Activated B cell treated with CpG ODN at 0.5 μM for 24 hours (primary cell): ENCODE measurements at regions of chr13 and their contacts with region 1.

Region 1: DNA sequence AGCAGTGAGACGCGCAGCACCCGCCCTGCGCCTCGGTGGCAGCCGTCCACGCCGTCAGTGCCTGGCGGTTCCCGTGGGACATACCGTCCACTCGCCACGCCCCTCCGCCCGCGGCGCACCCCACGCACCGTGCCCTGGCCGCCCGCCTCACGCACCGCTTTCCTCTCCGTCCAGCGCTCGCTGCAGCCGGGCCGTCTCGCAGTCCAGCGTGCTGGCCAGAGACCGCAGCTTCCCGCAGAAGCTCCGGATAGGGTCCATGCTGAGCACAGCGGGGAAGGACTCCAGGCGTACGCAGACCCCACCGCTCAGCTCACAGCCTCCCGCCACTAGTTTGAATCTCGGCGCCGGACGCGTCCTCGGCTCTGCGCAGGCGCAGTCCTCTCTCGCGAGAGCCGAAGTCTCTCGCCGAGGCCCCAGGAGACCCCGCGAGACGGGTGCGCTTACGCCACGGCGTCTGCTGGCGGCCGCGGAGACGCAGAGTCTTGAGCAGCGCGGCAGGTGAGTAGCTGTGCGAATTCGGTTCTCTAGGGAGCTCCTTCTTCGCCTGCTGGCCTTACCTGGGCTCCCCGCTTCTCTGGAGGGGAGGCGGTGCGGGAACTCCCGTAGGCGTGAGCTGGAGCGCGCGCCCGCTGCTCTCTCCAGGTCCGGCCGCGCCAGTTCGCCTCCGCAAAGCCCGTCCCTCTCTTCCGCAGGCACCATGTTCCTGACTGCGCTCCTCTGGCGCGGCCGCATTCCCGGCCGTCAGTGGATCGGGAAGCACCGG is at the starts of genes MRPL57 and SKA3:
- DNase-seq: peak; percentile 97
- ATAC-seq: peak; percentile 94
- H3K4me3 Mint-ChIP-seq: peak within 1 kb of the TSS; percentile 96
- H3K27ac Mint-ChIP-seq: peak within 1 kb of the TSS; percentile 91
- H3K4me1 Mint-ChIP-seq: peaks cover 22% of the 10 kb centered on the region
- H3K27me3 Mint-ChIP-seq: no peaks in the 10 kb centered on the region
- CTCF ChIP-seq: no peak
- total RNA-seq, gene MRPL57: 11.3 and 12.2 TPM in 2 replicates
- total RNA-seq, gene SKA3: 0.83 and 1.7 TPM in 2 replicates

Region 2: GRCh38 chr13:20902438-20903163 is 273.8 kb before region 1 on chr13 and contains the start of gene XPO4:
- CTCF ChIA-PET with region 1: no interaction called
- POLR2A ChIA-PET with region 1: interaction called, 5 read pairs
- intact Hi-C with region 1: loop called (anchors 1 kb)
- DNase-seq: peak; percentile 80
- ATAC-seq: peak; percentile 93
- H3K4me3 Mint-ChIP-seq: peak within 1 kb of the TSS; percentile 91
- H3K27ac Mint-ChIP-seq: peak within 1 kb of the TSS; percentile 86
- H3K4me1 Mint-ChIP-seq: peaks cover 32% of the 10 kb centered on the region
- H3K27me3 Mint-ChIP-seq: peaks cover 2% of the 10 kb centered on the region
- CTCF ChIP-seq: no peak
- total RNA-seq, gene XPO4: 25.2 and 27.4 TPM in 2 replicates

Region 3: DNA sequence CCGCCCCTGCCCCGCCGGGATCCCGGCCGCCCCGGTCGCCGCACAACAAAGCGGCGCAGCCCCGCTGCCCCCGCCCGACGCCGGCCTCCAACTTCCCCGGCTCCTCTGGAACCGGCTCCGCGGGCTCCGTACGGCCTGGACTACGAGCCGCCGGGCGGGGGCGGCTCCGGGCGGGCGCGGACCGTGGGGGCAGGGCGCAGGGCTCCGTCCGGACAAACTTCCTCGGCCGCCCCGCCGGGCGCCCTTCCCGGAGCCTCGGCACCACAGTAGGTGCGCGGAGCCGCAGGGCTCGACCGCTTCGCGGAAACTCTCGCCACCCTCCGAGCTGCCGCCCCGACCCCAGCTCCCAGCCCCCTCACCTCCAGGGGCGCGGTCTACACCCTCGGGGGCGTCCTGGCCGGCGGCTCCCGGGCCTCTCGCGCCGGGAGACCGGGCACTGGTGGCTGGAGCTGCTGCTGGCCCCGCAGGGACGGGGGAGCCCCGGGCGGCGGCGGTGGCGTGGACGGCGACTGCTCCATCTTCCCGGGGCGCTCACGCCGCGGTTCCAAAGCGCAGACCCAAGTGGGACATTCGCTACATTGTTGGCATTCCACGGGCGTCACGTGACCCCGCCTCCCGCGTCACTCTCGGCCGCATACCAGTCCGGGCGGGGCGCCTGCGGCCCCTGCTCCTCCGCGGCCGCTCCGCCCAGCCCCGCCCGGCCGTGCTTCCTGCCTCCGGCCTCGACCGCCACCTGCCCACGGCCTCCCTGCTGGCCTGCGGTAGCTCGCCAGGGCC is 115.2 kb before region 1 on chr13 and contains the start of gene LATS2:
- CTCF ChIA-PET with region 1: no interaction called
- POLR2A ChIA-PET with region 1: no interaction called
- intact Hi-C with region 1: loop called (anchors 2 kb)
- DNase-seq: peak; percentile 63
- ATAC-seq: peak; percentile 81
- H3K4me3 Mint-ChIP-seq: peak within 1 kb of the TSS; percentile 79
- H3K27ac Mint-ChIP-seq: peak within 1 kb of the TSS; percentile 50
- H3K4me1 Mint-ChIP-seq: peaks cover 3% of the 10 kb centered on the region
- H3K27me3 Mint-ChIP-seq: peaks cover 11% of the 10 kb centered on the region
- CTCF ChIP-seq: no peak
- total RNA-seq, gene LATS2: 1.5 and 1.7 TPM in 2 replicates

Region 4: GRCh38 chr13:21137696-21138095 is 38.7 kb before region 1 on chr13:
- CTCF ChIA-PET with region 1: no interaction called
- POLR2A ChIA-PET with region 1: interaction called, 13 read pairs
- intact Hi-C with region 1: no loop called
- DNase-seq: no peak
- ATAC-seq: no peak
- H3K4me3 Mint-ChIP-seq: no peak overlapping the region
- H3K27ac Mint-ChIP-seq: no peak overlapping the region
- H3K4me1 Mint-ChIP-seq: peaks cover 23% of the 10 kb centered on the region
- H3K27me3 Mint-ChIP-seq: peaks cover 13% of the 10 kb centered on the region
- CTCF ChIP-seq: no peak

Region 5: DNA sequence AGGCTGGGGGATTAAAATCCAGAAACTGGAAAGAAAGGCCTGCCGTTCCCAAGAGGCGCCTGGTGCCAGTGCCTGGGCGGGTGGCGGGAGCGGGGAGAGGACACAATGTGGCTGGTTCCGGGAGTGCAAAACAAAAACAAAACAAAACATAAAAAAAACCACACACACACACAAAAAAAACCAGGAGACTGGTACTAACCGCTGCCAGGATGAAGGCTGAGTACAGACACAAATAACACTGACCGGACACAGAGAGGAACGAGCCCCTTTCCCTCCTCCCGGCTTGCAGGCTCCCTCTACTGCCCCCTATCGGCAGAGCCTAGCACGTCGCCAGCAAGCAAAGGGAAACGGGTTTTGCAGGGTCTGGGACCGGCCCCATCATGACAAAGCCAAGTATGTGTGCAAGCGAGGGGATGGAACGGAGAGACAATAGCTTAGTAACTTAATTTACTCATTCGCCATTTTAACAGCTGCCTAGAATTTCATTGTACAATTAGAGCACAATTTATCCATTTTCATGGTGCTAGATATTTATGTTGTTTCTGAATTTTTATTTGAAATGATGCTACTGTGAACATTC is 300.6 kb after region 1 on chr13:
- CTCF ChIA-PET with region 1: interaction called, 3 read pairs
- POLR2A ChIA-PET with region 1: interaction called, 7 read pairs
- intact Hi-C with region 1: loop called (anchors 1 kb)
- DNase-seq: peak; percentile 62
- ATAC-seq: peak; percentile 92
- H3K4me3 Mint-ChIP-seq: peak overlapping the region; percentile 87
- H3K27ac Mint-ChIP-seq: no peak overlapping the region
- H3K4me1 Mint-ChIP-seq: peaks cover 13% of the 10 kb centered on the region
- H3K27me3 Mint-ChIP-seq: no peaks in the 10 kb centered on the region
- CTCF ChIP-seq: peak; percentile 36